ENCODE measurements at regions of chr17 and their contacts with region 1.

Region 1: GRCh38 chr17:43398724-43399595 is at the start of gene ARL4D:
- DNase-seq: no peak
- H3K4me3 ChIP-seq: peak within 1 kb of the TSS; percentile 73 to 90 (median 88)
- H3K27ac ChIP-seq: peak within 1 kb of the TSS; percentile 90
- H3K4me1 ChIP-seq: peaks cover 21% of the 10 kb centered on the region
- H3K27me3 ChIP-seq: no peaks in the 10 kb centered on the region
- CTCF ChIP-seq: no peak
- polyA plus RNA-seq, gene ARL4D: 36.5 to 49.1 TPM (median 43.1 TPM) in 3 replicates

Region 2: GRCh38 chr17:42964161-42964932 is 434.6 kb before region 1 on chr17 and contains the start of gene AARSD1:
- dilution Hi-C with region 1: no loop called
- DNase-seq: peak; percentile 79
- H3K4me3 ChIP-seq: peak within 1 kb of the TSS; percentile 58 to 72 (median 61)
- H3K27ac ChIP-seq: peak within 1 kb of the TSS; percentile 37
- H3K4me1 ChIP-seq: peaks cover 5% of the 10 kb centered on the region
- H3K27me3 ChIP-seq: no peaks in the 10 kb centered on the region
- CTCF ChIP-seq: no peak
- polyA plus RNA-seq, gene AARSD1: 38.5 to 49.3 TPM (median 45.0 TPM) in 3 replicates

Region 3: GRCh38 chr17:43338886-43339516 is 60.0 kb before region 1 on chr17:
- dilution Hi-C with region 1: no loop called
- DNase-seq: no peak
- H3K4me3 ChIP-seq: no peak overlapping the region
- H3K27ac ChIP-seq: no peak overlapping the region
- H3K4me1 ChIP-seq: peaks cover 9% of the 10 kb centered on the region
- H3K27me3 ChIP-seq: no peaks in the 10 kb centered on the region
- CTCF ChIP-seq: peak; percentile 30 to 78 (median 67)

Region 4: DNA sequence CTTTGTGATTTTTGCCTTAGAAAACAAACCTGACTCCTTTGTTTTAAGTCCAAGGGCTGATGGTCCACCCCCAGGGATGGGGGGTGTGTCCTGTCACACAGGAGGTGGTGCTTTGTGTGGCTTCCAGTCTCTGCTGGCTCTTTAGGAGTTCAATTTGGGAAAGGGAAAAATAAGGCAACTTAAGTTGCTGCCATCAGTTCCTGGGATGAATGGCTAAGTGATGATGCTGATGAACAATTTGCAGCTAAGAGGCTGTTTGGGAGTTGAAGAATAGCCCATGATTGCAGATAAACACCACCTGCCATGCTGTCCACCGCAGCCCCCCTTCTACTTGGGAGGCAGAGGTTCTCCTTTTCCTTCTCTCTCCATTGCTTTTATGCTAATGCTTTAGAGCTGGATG is 40.1 kb after region 1 on chr17:
- dilution Hi-C with region 1: loop called (anchors 5 kb)
- DNase-seq: no peak
- H3K4me3 ChIP-seq: no peak overlapping the region
- H3K27ac ChIP-seq: no peak overlapping the region
- H3K4me1 ChIP-seq: peaks cover 27% of the 10 kb centered on the region
- H3K27me3 ChIP-seq: no peaks in the 10 kb centered on the region
- CTCF ChIP-seq: no peak

Region 5: GRCh38 chr17:43467981-43468581 is 69.1 kb after region 1 on chr17:
- dilution Hi-C with region 1: loop called (anchors 5 kb)
- DNase-seq: no peak
- H3K4me3 ChIP-seq: peak overlapping the region in 2 of 3 experiments; percentile 6 to 34
- H3K27ac ChIP-seq: peak overlapping the region; percentile 96
- H3K4me1 ChIP-seq: peaks cover 36% of the 10 kb centered on the region
- H3K27me3 ChIP-seq: no peaks in the 10 kb centered on the region
- CTCF ChIP-seq: peak in 1 of 3 experiments; percentile 10

Region 6: GRCh38 chr17:43927060-43927864 is 528.3 kb after region 1 on chr17:
- dilution Hi-C with region 1: no loop called
- DNase-seq: no peak
- H3K4me3 ChIP-seq: peak overlapping the region in 1 of 3 experiments; percentile 11
- H3K27ac ChIP-seq: no peak overlapping the region
- H3K4me1 ChIP-seq: peaks cover 3% of the 10 kb centered on the region
- H3K27me3 ChIP-seq: peaks cover 28% of the 10 kb centered on the region
- CTCF ChIP-seq: no peak

Measured in keratinocyte (primary cell).